OCI-LY7 (cell line): ENCODE measurements at regions of chr4 and their contacts with region 1.

Region 1: GRCh38 chr4:44760142-44760898 is 34.0 kb upstream of the GNPDA2 start:
- DNase-seq: peak; percentile 56
- H3K4me3 ChIP-seq: no peak overlapping the region
- H3K27ac ChIP-seq: no peak overlapping the region
- H3K4me1 ChIP-seq: no peaks in the 10 kb centered on the region
- CTCF ChIP-seq: peak; percentile 89

Region 2: DNA sequence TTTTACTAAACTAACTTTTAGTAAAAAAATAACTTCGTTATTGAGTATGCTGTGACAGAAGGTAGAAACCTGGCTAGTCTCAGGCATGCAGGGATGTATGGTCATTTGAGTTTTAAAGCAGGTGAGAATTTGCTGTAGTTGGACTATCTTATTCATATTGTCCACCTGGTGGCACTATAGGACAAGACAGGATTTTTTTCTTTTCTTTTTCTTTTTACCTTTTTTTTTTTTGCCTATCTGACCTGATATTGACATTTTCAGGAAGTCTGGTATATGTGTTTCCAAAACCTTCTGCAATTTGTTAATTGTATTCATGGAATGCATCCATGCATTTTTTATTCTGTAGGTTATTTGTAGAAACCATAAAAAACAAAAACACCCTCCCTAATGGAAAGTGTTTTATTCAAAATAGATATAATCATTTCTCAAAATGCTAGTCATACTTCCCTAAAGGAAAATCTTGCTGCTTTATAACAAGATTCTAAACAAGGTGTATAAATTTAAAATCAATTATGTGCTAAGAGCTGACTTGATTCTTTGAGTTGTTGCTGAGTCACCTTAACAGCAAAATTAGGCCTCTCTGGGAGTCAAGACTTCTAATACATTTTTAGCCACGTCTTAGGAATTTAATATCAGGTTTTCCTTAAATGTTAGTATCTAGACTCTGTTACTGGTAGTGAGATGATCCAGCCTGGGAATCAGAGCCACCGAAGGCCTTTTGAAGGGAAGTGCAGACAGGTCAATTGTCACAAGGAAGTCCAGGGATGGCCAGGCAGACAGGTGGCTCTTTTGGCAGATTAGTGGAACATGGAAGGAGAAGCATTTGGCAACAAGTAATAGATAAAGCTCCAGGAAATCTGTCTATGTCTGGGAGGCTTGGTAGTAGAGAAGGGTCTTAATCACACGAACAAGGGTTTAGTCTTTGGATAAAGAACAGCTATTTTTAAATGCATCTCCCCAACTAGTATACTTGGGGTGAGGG is 167.4 kb after region 1 on chr4:
- CTCF ChIA-PET with region 1: no interaction called
- POLR2A ChIA-PET with region 1: no interaction called
- intact Hi-C with region 1: loop called (anchors 10 kb)
- DNase-seq: peak; percentile 33
- H3K4me3 ChIP-seq: no peak overlapping the region
- H3K27ac ChIP-seq: no peak overlapping the region
- H3K4me1 ChIP-seq: no peaks in the 10 kb centered on the region
- CTCF ChIP-seq: peak; percentile 77

Region 3: DNA sequence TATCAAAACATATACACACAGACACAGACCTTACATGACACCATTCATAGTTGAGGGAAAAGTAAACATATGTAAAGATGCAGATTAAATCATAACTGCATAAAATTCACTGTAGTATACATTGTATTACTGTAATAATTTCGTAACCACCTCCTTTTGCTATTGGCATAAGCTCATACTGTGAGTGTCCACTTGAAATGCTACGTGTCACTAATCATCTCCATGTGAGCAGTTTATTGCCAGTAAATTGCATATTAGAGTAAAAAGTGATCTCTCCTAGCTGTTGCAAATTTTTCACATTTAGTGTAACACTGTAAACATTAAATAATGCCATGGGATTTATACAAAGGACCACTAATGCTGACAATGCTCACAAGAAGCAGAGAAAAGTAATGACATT is 222.8 kb after region 1 on chr4:
- CTCF ChIA-PET with region 1: no interaction called
- POLR2A ChIA-PET with region 1: no interaction called
- intact Hi-C with region 1: no loop called
- DNase-seq: no peak
- H3K4me3 ChIP-seq: no peak overlapping the region
- H3K27ac ChIP-seq: no peak overlapping the region
- H3K4me1 ChIP-seq: no peaks in the 10 kb centered on the region
- CTCF ChIP-seq: no peak

Region 4: DNA sequence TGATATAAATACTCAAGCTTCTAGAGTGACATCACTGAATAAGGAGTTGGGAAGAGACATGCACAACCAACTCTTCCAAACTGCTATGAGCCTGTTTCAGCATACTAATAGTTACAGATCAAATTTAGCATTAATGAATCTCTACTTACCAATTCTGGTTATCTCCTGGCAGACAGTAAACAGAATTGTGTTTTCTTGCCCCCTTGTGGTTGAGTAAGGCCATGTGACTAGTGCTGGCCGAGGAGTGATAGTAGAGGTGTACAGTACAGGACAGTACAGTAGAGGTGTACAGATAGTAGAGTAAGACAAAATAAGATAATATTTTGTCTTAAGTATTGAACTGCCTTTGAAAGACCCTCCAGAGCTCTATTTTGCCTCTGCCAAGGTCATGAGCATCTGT is 682.1 kb after region 1 on chr4:
- CTCF ChIA-PET with region 1: no interaction called
- POLR2A ChIA-PET with region 1: no interaction called
- intact Hi-C with region 1: loop called (anchors 10 kb)
- DNase-seq: no peak
- H3K4me3 ChIP-seq: no peak overlapping the region
- H3K27ac ChIP-seq: no peak overlapping the region
- H3K4me1 ChIP-seq: no peaks in the 10 kb centered on the region
- CTCF ChIP-seq: peak; percentile 55; the same call in 1 of the 2 replicates

Region 5: DNA sequence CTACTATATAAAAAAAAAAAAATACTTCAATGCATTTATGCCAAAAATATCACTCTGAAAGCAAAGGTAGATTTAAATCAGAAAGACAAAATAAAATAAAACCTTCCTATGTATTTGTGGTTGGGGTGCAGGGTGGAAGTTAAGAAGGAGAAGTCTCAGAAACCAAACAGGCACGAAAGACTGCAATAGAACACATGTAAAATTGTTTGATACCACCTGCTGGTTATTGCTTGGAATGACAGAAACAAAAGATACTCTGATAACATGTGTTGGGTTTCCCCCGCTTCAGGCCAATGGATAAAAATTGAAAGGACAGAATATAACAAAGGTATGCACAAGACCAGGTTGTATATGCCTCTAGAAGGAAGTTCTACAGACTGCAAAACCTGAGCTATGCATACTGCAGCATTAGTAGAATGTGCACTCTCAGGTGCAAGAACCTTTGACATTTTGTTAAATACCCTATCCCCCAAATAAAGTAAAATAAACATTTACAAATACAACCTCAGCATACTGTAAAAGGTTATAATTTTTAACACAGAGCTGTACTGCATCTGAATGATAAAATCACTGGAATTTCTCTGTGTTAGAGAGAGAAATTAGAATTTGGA is 1510.8 kb after region 1 on chr4:
- CTCF ChIA-PET with region 1: no interaction called
- POLR2A ChIA-PET with region 1: interaction called, 4 read pairs
- intact Hi-C with region 1: loop called (anchors 5 kb)
- DNase-seq: peak; percentile 19
- H3K4me3 ChIP-seq: no peak overlapping the region
- H3K27ac ChIP-seq: no peak overlapping the region
- H3K4me1 ChIP-seq: no peaks in the 10 kb centered on the region
- CTCF ChIP-seq: peak; percentile 70